ENCODE measurements at regions of chr11 and their contacts with region 1.

Region 1: DNA sequence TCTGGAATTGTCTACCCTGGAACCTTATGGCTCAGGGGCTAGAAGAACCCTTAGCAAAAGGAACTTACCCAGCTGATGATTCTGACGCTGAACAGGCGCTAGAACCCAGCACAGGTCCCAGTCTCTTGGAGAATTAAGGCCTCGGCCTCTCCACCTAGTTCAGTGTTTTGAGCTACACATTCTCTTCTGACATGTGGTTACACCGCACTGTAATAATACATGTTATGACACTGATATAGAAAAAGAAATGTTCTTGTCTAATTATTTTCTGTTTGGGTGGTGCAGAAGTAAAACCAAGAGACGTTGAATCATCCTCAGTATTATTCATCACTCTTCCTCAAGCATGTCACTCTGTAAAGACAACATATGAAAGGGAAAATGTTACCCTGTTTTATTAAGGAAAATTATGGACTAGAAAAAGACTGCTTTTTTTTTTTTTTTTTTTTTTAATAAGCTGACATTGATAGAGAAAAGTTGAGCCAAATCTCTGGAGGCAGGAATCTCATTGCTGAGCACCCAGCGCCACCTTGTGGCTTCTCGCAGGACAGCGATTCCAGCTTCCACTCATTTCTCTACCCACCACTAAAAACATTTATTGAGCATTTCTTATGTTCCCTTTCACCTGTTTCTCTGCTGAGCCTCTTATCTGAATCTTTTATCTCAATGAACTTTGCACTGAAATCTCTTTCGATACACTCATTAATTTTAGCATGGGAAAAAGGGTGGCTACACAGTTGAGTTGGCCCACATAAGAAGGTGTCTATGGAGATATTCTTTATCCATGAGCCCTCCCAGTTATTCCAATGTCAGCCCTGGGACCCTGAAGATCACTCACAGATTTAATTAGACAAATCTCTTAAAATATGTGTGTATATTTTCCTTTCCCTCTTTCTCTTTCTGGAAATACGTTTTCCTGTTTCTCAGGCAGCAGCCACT is 12.6 kb upstream of the APLNR start:
- DNase-seq: peak in 5 of 6 donors; percentile 30 to 83 (median 63)
- ATAC-seq: peak; percentile 69 to 94 (median 89)
- H3K4me3 ChIP-seq: no peak overlapping the region
- H3K27ac ChIP-seq: no peak overlapping the region
- H3K4me1 ChIP-seq: no peaks in the 10 kb centered on the region
- H3K27me3 ChIP-seq: no peaks in the 10 kb centered on the region
- CTCF ChIP-seq: peak; percentile 61 to 84 (median 66)

Region 2: GRCh38 chr11:56783448-56784041 is 466.1 kb before region 1 on chr11:
- intact Hi-C with region 1: no loop called
- DNase-seq: peak in 1 of 6 donors; percentile 7
- ATAC-seq: peak in 3 of 4 donors; percentile 52 to 65 (median 52)
- H3K4me3 ChIP-seq: no peak overlapping the region
- H3K27ac ChIP-seq: no peak overlapping the region
- H3K4me1 ChIP-seq: no peaks in the 10 kb centered on the region
- H3K27me3 ChIP-seq: no peaks in the 10 kb centered on the region
- CTCF ChIP-seq: peak; percentile 26 to 63 (median 50)

Region 3: GRCh38 chr11:56841210-56841810 is 408.3 kb before region 1 on chr11:
- intact Hi-C with region 1: loop called in 2 of 3 experiments (anchors 5 to 10 kb)
- DNase-seq: peak in 3 of 6 donors; percentile 12 to 62 (median 27)
- ATAC-seq: peak in 3 of 4 donors; percentile 85 to 88 (median 85)
- H3K4me3 ChIP-seq: no peak overlapping the region
- H3K27ac ChIP-seq: no peak overlapping the region
- H3K4me1 ChIP-seq: peaks cover 0 to 3% (median 0%) of the 10 kb centered on the region in 3 donors
- H3K27me3 ChIP-seq: no peaks in the 10 kb centered on the region
- CTCF ChIP-seq: peak; percentile 32 to 57 (median 42)

Region 4: DNA sequence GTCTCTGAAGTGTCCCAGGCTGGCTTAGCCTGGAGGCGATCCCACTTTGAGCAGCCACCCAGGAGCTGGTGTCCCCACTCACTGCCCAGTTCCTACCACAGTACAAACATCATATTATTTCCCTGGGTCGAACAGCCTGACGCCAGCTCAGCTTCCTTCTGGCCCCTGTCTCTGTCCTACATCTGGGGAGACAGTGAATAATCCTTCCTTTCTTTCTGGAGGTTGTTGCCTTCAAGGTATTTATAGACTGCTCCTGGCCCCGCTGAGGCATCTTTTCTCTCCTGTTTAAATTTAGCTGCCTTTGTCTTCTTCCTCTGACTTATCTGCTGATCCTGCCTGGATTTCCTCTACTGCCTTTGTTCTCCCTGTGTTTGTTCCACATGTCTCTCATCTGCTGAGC is 124.7 kb before region 1 on chr11:
- intact Hi-C with region 1: loop called in 1 of 3 experiments (anchors 10 kb)
- DNase-seq: no peak
- ATAC-seq: no peak
- H3K4me3 ChIP-seq: no peak overlapping the region
- H3K27ac ChIP-seq: no peak overlapping the region
- H3K4me1 ChIP-seq: no peaks in the 10 kb centered on the region
- H3K27me3 ChIP-seq: peaks cover 0 to 4% (median 0%) of the 10 kb centered on the region in 4 donors
- CTCF ChIP-seq: no peak

Region 5: GRCh38 chr11:57191314-57192219 is 58.1 kb before region 1 on chr11:
- intact Hi-C with region 1: no loop called
- DNase-seq: no peak
- ATAC-seq: no peak
- H3K4me3 ChIP-seq: no peak overlapping the region
- H3K27ac ChIP-seq: no peak overlapping the region
- H3K4me1 ChIP-seq: no peaks in the 10 kb centered on the region
- H3K27me3 ChIP-seq: no peaks in the 10 kb centered on the region
- CTCF ChIP-seq: no peak

Region 6: DNA sequence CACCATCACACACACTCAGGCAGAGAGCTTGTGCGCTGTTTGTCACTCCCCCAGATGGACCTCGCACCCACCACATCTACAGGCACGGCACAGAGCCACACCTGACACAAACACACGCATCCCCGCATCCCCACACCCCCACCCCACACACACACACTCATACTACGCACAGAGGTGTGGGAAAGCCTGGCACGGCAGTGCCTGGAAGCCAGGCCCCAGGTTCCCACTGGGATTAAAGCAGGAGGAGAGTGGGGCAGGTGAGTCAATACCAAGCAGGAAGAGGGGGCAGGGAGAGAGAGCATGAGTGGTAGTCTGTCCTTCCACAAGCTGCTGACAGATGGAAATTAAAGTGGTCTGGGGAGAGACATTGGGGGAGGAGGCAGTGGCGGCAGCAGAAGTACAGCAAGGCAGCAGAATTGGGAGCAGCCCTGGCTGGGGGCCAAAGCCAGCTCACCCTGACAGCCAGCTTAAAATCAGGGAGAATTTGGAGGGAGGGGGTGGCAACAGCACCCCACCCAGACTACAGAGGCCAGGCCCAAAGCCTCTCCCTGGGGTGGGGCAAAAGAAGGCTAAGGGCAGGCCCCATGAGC is 54.4 kb after region 1 on chr11:
- intact Hi-C with region 1: loop called in 1 of 3 experiments (anchors 10 kb)
- DNase-seq: peak in 3 of 6 donors; percentile 37 to 67 (median 60)
- ATAC-seq: peak; percentile 34 to 53 (median 44)
- H3K4me3 ChIP-seq: no peak overlapping the region
- H3K27ac ChIP-seq: no peak overlapping the region
- H3K4me1 ChIP-seq: peaks cover 14 to 28% (median 24%) of the 10 kb centered on the region in 3 donors
- H3K27me3 ChIP-seq: no peaks in the 10 kb centered on the region
- CTCF ChIP-seq: no peak

Measured in pancreas (tissue), 10 donors.